PC-9 (cell line): ENCODE measurements at regions of chr5 and their contacts with region 1.

Region 1: GRCh38 chr5:178509491-178510057 is 80.6 kb downstream of the COL23A1 start:
- DNase-seq: no peak
- H3K4me3 ChIP-seq: no peak overlapping the region
- H3K27ac ChIP-seq: no peak overlapping the region
- H3K4me1 ChIP-seq: no peaks in the 10 kb centered on the region
- H3K27me3 ChIP-seq: peaks cover 95% of the 10 kb centered on the region
- CTCF ChIP-seq: no peak

Region 2: DNA sequence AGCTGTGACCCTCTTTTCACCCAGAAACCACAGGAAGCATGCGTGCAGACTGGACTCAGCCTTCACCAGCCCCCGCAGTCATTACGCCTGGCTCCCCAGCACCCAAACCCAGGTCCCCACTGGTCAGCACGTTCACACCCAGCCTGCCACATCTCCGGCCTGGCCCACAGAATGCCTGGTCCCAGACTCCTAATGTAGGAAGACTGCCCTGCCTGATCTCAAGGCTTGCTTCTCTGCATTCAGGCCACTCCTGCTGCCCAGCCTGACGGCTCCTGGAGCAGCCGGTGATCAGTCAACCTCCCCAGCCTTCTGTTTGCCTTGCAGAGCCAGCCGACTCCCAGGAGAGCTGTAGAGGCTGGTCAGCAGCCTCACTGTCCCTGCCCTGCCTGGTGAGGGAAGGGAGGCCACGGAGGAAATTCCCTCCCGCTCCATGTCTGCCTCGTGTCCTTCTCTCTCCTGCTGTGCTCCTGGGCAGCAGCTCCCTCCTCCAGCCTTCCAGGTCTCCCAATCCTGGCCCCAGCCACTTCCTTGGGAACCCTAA is 810.2 kb after region 1 on chr5:
- CTCF ChIA-PET with region 1: no interaction called
- POLR2A ChIA-PET with region 1: interaction called, 16 read pairs
- intact Hi-C with region 1: no loop called
- DNase-seq: no peak
- H3K4me3 ChIP-seq: no peak overlapping the region
- H3K27ac ChIP-seq: no peak overlapping the region
- H3K4me1 ChIP-seq: no peaks in the 10 kb centered on the region
- H3K27me3 ChIP-seq: peaks cover 97% of the 10 kb centered on the region
- CTCF ChIP-seq: no peak